ENCODE measurements at regions of chr1 and their contacts with region 1.

Region 1: DNA sequence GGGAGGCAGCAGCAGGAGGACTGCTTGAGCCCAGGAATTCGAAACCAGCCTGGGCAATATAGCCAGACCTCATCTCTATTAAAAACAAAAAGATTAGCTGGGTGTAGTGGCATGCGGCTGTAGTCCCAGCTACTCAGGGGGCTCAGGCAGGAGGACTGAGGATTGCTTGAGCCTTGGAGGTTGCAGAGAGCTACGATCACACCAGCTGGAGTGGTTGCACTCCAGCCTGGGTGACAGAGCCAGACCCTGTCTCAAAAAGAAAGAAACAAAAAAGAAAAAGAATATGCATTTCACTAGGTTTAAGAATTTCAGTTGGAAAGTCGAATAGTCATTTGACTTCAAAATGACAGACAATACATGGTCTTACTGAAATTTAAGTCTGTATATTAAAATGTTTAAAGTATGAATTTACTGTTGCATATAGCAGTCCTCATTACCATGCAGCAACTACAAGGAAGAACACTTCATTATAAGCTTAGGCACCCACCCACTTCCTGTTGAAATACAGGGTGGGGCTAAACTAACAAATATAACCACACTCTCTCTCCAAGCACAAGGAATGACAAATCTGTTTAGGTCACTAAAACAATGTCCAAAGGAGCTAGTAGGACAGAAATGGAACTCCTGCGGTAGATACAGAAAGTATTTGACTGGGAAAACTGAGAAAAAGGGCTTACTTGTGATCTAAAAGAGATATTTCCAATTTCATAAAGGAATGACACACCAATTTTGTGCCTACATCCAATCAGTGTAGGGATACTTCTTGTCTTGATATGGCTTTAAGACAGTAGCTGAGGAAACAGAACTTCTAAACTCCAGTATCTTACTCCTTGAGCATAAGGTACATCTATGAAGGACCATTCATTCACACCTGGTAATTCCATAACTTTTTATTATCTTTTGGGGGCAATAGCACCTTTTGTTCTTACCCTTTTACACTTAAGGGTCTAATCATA is 44.1 kb downstream of the GPR3 start:
- DNase-seq: peak; percentile 70 to 81 (median 70)
- H3K4me3 ChIP-seq: peak overlapping the region; percentile 17 to 69 (median 19)
- H3K4me3 Mint-ChIP-seq: peak overlapping the region; percentile 53 to 87
- H3K27ac ChIP-seq: peak overlapping the region; percentile 95 to 98
- H3K27ac Mint-ChIP-seq: peak overlapping the region; percentile 93 to 99 (median 98)
- H3K4me1 ChIP-seq: peaks cover 79 to 84% of the 10 kb centered on the region in 2 donors
- H3K4me1 Mint-ChIP-seq: peaks cover 76% of the 10 kb centered on the region
- H3K27me3 ChIP-seq: no peaks in the 10 kb centered on the region
- H3K27me3 Mint-ChIP-seq: no peaks in the 10 kb centered on the region
- CTCF ChIP-seq: no peak

Region 2: GRCh38 chr1:27489910-27490741 is 53.6 kb after region 1 on chr1 and contains the start of gene WASF2:
- intact Hi-C with region 1: loop called (anchors 5 to 10 kb)
- DNase-seq: peak; percentile 96 to 97 (median 97)
- H3K4me3 ChIP-seq: peak within 1 kb of the TSS; percentile 78 to 99 (median 99)
- H3K4me3 Mint-ChIP-seq: peak within 1 kb of the TSS; percentile 91 to 99
- H3K27ac ChIP-seq: peak within 1 kb of the TSS; percentile 88 to 99
- H3K27ac Mint-ChIP-seq: peak within 1 kb of the TSS; percentile 96 to 100 (median 99)
- H3K4me1 ChIP-seq: peaks cover 31 to 45% of the 10 kb centered on the region in 2 donors
- H3K4me1 Mint-ChIP-seq: peaks cover 45% of the 10 kb centered on the region
- H3K27me3 ChIP-seq: no peaks in the 10 kb centered on the region
- H3K27me3 Mint-ChIP-seq: peaks cover 0 to 6% (median 0%) of the 10 kb centered on the region in 3 donors
- CTCF ChIP-seq: no peak
- polyA plus RNA-seq, gene WASF2: 53.5 to 91.6 (median 86.4) TPM

Measured in CD14-positive monocyte (primary cell).